ENCODE measurements at regions of chr14 and their contacts with region 1.

Region 1: GRCh38 chr14:99393047-99393655 is 87.5 kb downstream of the SETD3 start:
- DNase-seq: no peak
- H3K4me3 ChIP-seq: no peak overlapping the region
- H3K27ac ChIP-seq: no peak overlapping the region
- H3K27me3 ChIP-seq: no peaks in the 10 kb centered on the region
- CTCF ChIP-seq: peak; percentile 80

Region 2: DNA sequence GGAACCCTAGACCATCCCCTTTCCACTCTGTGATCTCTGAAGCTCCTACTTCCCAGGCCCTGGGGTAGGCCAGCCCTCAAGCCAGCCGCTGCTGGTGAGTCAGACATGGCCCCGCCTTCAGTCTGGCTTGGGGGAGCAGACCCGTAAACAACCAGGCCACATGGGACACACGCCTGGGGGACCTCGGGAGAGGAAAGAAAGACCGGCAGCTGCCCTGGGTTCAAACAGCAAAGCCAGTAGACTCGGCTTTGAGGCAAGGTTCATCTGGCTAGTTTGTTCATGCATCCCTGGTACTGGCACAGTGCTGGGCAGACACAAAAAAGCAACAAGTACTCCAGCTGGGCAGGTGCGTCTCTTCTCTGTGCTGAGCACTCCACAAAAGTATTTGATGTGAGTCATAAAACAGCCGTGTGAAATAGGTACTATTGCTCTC is 14.4 kb before region 1 on chr14:
- CTCF ChIA-PET with region 1: interaction called, 47 read pairs
- POLR2A ChIA-PET with region 1: no interaction called
- DNase-seq: no peak
- H3K4me3 ChIP-seq: no peak overlapping the region
- H3K27ac ChIP-seq: no peak overlapping the region
- H3K27me3 ChIP-seq: peaks cover 3% of the 10 kb centered on the region
- CTCF ChIP-seq: no peak